ENCODE measurements at regions of chr17 and their contacts with region 1.

Region 1: GRCh38 chr17:21098934-21099689 is 27.7 kb upstream of the DHRS7B start:
- DNase-seq: peak; percentile 65
- ATAC-seq: peak; percentile 99
- H3K4me3 ChIP-seq: peak overlapping the region; percentile 95
- H3K27ac ChIP-seq: peak overlapping the region; percentile 97
- H3K4me1 ChIP-seq: no peaks in the 10 kb centered on the region; the same call in 1 of the 2 replicates
- H3K27me3 ChIP-seq: no peaks in the 10 kb centered on the region
- CTCF ChIP-seq: no peak
- EP300 ChIP-seq: no peak
- POLR2A ChIP-seq: peak; percentile 48; the same call in 1 of the 2 replicates
- RAD21 ChIP-seq: no peak

Region 2: DNA sequence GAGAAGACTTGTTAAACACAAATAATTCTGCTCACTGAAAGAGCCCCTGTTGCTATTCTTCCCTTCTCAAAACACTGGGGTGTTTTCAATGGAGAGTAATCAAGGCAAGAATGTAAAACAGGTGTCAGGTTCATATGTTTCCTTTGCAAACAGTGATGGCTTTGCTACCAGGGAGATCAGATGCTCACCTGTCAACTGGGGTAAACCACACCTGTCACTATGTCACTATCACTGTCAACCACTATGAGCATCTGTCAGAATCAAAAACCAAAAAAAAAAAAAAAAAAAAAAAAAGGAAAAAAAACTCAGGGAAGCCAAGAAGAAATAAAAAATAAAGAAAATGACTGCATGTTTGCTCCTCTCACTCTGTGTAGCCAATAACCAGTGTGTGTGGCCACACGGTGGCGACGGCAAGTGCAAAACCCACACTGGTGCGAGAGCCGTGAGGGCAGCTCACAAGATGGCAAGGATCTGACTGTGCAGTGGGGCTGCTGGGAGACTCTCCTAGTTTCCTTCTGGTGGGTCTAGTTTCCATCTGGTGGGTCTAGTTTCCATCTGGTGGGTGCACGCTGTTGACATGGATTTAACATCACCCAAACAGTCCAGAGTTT is 79.0 kb before region 1 on chr17:
- CTCF ChIA-PET with region 1: interaction called, 13 read pairs
- POLR2A ChIA-PET with region 1: no interaction called
- RAD21 ChIA-PET with region 1: interaction called, 4 read pairs
- SMC1A ChIA-PET with region 1: interaction called, 5 read pairs
- in situ Hi-C with region 1: no loop called
- intact Hi-C with region 1: loop called (anchors 1 kb)
- DNase-seq: no peak
- ATAC-seq: peak; percentile 95
- H3K4me3 ChIP-seq: no peak overlapping the region
- H3K27ac ChIP-seq: no peak overlapping the region
- H3K4me1 ChIP-seq: no peaks in the 10 kb centered on the region
- H3K27me3 ChIP-seq: no peaks in the 10 kb centered on the region
- CTCF ChIP-seq: peak in 2 of 3 experiments; percentile 40 to 55; a peak in 4 of 6 replicates
- EP300 ChIP-seq: no peak
- POLR2A ChIP-seq: no peak
- RAD21 ChIP-seq: peak; percentile 51; the same call in 1 of the 2 replicates

Region 3: GRCh38 chr17:21034340-21035235 is 64.5 kb before region 1 on chr17:
- CTCF ChIA-PET with region 1: interaction called, 30 read pairs
- POLR2A ChIA-PET with region 1: interaction called, 8 read pairs
- RAD21 ChIA-PET with region 1: interaction called, 7 read pairs
- SMC1A ChIA-PET with region 1: interaction called, 25 read pairs
- in situ Hi-C with region 1: no loop called
- intact Hi-C with region 1: no loop called
- DNase-seq: peak; percentile 38
- ATAC-seq: peak; percentile 66
- H3K4me3 ChIP-seq: peak overlapping the region; percentile 54
- H3K27ac ChIP-seq: peak overlapping the region; percentile 67
- H3K4me1 ChIP-seq: peaks cover 38% of the 10 kb centered on the region
- H3K27me3 ChIP-seq: no peaks in the 10 kb centered on the region
- CTCF ChIP-seq: no peak
- EP300 ChIP-seq: peak; percentile 39 to 55; a peak in 2 of 4 replicates
- POLR2A ChIP-seq: 0 out of 2 replicates have a peak, but pooled peaks have one; percentile 48
- RAD21 ChIP-seq: no peak

Region 4: GRCh38 chr17:21058098-21058893 is 40.8 kb before region 1 on chr17:
- CTCF ChIA-PET with region 1: interaction called, 13 read pairs
- POLR2A ChIA-PET with region 1: interaction called, 3 read pairs
- RAD21 ChIA-PET with region 1: interaction called, 4 read pairs
- SMC1A ChIA-PET with region 1: interaction called, 4 read pairs
- in situ Hi-C with region 1: no loop called
- intact Hi-C with region 1: no loop called
- DNase-seq: no peak
- ATAC-seq: no peak
- H3K4me3 ChIP-seq: no peak overlapping the region
- H3K27ac ChIP-seq: no peak overlapping the region
- H3K4me1 ChIP-seq: peaks cover 33% of the 10 kb centered on the region
- H3K27me3 ChIP-seq: no peaks in the 10 kb centered on the region
- CTCF ChIP-seq: no peak
- EP300 ChIP-seq: no peak
- POLR2A ChIP-seq: no peak
- RAD21 ChIP-seq: no peak